Caco-2 (cell line): ENCODE measurements at regions of chr5 and their contacts with region 1.

Region 1: GRCh38 chr5:142720641-142721271 is 34.9 kb upstream of the FGF1 start:
- DNase-seq: peak; percentile 70 to 71
- H3K4me3 ChIP-seq: no peak overlapping the region
- H3K4me3 Mint-ChIP-seq: peak overlapping the region; percentile 55
- H3K27ac Mint-ChIP-seq: peak overlapping the region; percentile 87
- H3K4me1 ChIP-seq: peaks cover 23% of the 10 kb centered on the region
- H3K4me1 Mint-ChIP-seq: peaks cover 27% of the 10 kb centered on the region
- H3K27me3 ChIP-seq: no peaks in the 10 kb centered on the region
- H3K27me3 Mint-ChIP-seq: no peaks in the 10 kb centered on the region
- CTCF ChIP-seq: no peak

Region 2: DNA sequence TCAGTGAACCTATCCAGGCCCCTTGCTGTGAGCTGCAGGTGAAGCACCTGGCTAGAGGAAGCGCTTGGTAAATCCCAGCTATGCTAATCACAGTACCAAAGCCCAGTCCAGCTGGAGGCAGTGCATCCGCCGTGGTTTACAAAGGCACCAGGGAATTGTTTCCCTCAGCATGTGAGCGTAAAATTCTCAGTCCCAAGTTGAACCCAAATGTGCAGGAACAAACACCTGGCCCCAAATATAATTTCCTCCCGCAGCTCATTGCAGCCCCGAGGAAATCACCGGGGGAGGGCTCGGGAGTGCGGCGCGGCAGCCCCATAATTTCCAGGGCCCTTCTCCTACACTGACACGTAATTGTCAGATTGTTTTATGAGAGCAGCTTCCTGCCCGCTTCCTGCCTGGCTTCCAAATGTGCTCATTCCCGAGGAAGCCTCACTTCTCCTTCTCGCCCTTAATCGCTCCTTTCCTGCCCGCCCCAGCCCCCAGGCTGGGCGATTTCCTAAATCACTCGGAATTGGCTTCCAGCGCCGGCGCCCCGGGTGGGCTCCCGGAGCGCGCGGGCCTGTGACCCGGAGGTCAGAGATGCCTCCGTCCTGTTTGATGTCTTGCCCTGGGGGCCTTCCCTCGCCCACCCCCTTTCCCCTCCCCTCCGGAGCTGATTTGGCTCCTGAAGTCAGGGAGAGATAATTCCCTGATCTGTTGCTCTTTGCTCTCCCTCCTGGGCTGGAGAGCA is 169.3 kb before region 1 on chr5:
- CTCF ChIA-PET with region 1: no interaction called
- POLR2A ChIA-PET with region 1: no interaction called
- intact Hi-C with region 1: no loop called
- DNase-seq: peak in 1 of 2 experiments; percentile 42
- H3K4me3 ChIP-seq: no peak overlapping the region
- H3K4me3 Mint-ChIP-seq: peak overlapping the region; percentile 53
- H3K27ac Mint-ChIP-seq: no peak overlapping the region
- H3K4me1 ChIP-seq: no peaks in the 10 kb centered on the region
- H3K4me1 Mint-ChIP-seq: peaks cover 14% of the 10 kb centered on the region
- H3K27me3 ChIP-seq: no peaks in the 10 kb centered on the region; the same call in 1 of the 2 replicates
- H3K27me3 Mint-ChIP-seq: no peaks in the 10 kb centered on the region
- CTCF ChIP-seq: no peak

Region 3: DNA sequence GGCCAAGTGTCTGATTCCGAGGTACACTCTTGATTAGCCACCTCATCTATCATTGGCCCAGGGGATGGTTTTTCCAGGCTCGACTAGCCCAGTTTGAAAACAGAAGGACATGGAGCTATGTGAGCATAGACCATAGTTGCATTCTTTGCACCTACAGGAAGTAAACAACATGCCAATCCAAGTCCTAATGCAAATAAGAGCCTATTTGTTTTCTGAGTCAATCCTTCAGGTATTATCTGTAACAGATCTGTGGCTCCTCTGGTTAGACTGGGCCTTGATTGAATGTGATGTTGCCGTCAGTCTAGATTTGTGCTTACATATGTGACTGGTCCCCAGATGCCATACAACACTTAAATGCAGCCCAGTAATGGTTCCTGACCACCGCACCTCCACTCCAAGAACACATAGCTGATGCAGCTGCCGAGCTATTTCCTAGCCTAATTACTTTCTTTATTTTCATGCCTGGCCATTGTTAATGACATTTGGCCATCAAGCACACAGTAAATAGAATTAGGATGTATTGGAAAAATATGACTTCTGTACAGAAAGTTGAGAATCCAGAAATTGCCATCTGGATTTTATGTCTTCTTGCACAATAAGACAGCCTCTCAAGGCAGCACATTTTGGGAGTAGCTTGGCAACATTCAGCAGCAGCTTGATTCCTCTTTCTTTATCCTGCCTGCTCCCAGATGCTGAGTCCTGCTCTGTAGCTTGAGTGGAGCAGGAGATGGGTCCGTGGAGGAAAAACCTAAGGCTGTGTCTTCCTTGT is 19.9 kb after region 1 on chr5:
- CTCF ChIA-PET with region 1: no interaction called
- POLR2A ChIA-PET with region 1: no interaction called
- intact Hi-C with region 1: loop called (anchors 1 kb)
- DNase-seq: peak in 1 of 2 experiments; percentile 18
- H3K4me3 ChIP-seq: no peak overlapping the region
- H3K4me3 Mint-ChIP-seq: no peak overlapping the region
- H3K27ac Mint-ChIP-seq: no peak overlapping the region
- H3K4me1 ChIP-seq: peaks cover 7% of the 10 kb centered on the region; the same call in 1 of the 2 replicates
- H3K4me1 Mint-ChIP-seq: peaks cover 10% of the 10 kb centered on the region
- H3K27me3 ChIP-seq: no peaks in the 10 kb centered on the region
- H3K27me3 Mint-ChIP-seq: no peaks in the 10 kb centered on the region
- CTCF ChIP-seq: no peak

Region 4: GRCh38 chr5:142888469-142889085 is 167.8 kb after region 1 on chr5:
- CTCF ChIA-PET with region 1: interaction called, 25 read pairs
- POLR2A ChIA-PET with region 1: no interaction called
- intact Hi-C with region 1: loop called (anchors 1 kb)
- DNase-seq: peak; percentile 54 to 59
- H3K4me3 ChIP-seq: no peak overlapping the region
- H3K4me3 Mint-ChIP-seq: no peak overlapping the region
- H3K27ac Mint-ChIP-seq: no peak overlapping the region
- H3K4me1 ChIP-seq: peaks cover 17% of the 10 kb centered on the region
- H3K4me1 Mint-ChIP-seq: peaks cover 7% of the 10 kb centered on the region
- H3K27me3 ChIP-seq: no peaks in the 10 kb centered on the region
- H3K27me3 Mint-ChIP-seq: no peaks in the 10 kb centered on the region
- CTCF ChIP-seq: peak; percentile 68 to 69